Dendritic cell treated with granulocyte-macrophage colony-stimulating factor and Interleukin-4, amounts not matched to agents 40 ng/mL and 50 ng/mL, for 4 days (primary cell): ENCODE measurements at regions of chr21 and their contacts with region 1.

Region 1: GRCh38 chr21:31665397-31665796 is 5.9 kb downstream of the SOD1 start:
- H3K4me3 Mint-ChIP-seq: no peak overlapping the region
- H3K27ac Mint-ChIP-seq: peak overlapping the region; percentile 10
- H3K4me1 Mint-ChIP-seq: peaks cover 43% of the 10 kb centered on the region
- H3K27me3 Mint-ChIP-seq: no peaks in the 10 kb centered on the region

Region 2: DNA sequence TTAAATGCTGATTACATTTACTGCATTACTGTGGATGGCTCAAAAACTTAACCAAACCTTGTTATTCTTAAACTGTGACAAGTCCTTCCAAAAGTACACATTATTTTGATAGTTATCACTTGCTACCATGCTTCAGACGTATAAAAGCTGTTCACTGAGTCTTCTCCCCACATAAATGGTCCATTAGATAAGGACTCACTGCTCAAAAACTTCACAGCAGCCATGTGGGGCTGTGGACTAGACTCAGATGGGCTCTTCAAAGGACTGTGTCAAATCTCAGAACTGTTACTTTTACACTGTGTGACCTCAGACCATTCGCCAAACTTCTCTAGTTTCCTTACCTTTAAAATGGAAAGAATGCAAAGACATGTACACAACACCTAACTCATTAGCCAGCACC is 54.9 kb after region 1 on chr21:
- intact Hi-C with region 1: loop called (anchors 5 kb)
- H3K4me3 Mint-ChIP-seq: no peak overlapping the region
- H3K27ac Mint-ChIP-seq: no peak overlapping the region
- H3K4me1 Mint-ChIP-seq: peaks cover 39% of the 10 kb centered on the region
- H3K27me3 Mint-ChIP-seq: no peaks in the 10 kb centered on the region

Region 3: DNA sequence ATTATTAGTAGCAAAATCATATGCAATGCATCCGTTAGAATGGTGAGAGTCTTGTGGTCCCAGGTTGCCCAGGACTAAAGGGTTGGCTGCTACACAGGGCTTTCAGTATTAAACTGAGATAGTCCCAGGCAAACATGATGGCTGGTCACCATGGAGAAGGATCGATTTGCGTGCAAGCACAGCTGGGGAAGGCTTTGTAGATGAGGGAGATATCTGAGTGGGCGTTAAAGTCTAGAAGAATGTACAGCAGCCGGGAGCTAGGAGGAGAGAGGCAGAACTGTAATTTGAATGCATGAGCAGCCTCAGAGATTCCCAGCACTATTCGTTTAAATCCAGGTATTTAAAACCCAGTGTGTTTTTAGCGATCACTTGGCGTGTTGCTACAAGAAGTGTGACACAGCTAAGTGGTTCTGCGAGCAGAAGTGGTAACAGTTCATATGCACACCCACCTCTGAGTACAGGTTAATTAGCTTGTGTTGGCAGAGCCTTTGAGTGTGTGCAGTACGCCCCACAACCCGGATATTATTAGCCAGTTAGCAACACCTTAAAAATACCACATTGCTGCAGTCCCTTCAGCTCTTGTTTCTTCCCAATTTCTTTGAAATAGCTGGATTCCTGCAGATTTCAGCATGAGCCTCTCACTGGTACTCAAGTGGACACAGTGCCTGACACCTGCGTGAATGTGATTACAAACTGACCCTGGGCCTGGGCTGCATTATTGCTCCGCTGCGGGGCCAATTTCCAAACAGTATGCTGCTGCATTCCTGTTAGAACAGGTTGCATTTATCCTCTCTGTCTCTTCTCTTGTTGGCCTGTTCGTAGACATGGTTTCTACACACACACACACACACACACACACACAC is 133.7 kb after region 1 on chr21:
- intact Hi-C with region 1: no loop called
- H3K4me3 Mint-ChIP-seq: no peak overlapping the region
- H3K27ac Mint-ChIP-seq: no peak overlapping the region
- H3K4me1 Mint-ChIP-seq: peaks cover 9% of the 10 kb centered on the region
- H3K27me3 Mint-ChIP-seq: peaks cover 19% of the 10 kb centered on the region